Mammary epithelial cell (primary cell): ENCODE measurements at regions of chr1 and their contacts with region 1.

Region 1: DNA sequence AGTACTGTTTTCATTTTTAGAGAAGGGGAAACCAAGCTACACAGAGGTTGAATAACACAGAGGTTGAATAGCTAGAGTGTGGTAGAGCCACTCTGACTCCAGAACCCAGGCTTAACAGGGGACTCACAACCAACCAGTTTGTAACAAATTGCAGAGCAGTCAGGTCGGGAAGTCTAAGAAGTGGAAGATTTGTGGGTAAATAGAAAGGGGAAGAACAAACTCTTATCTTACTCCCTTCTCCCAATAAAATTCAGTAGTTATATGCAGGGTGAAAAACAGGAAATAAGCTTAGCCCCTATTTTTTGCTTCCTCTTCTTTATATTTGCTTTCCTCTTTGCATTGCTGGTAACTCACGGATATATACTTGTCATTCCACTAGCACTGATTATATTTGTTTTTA is 23.2 kb downstream of the CDC42 start:
- DNase-seq: no peak
- H3K4me3 ChIP-seq: no peak overlapping the region
- H3K27ac ChIP-seq: no peak overlapping the region
- H3K4me1 ChIP-seq: no peaks in the 10 kb centered on the region
- H3K27me3 ChIP-seq: no peaks in the 10 kb centered on the region
- CTCF ChIP-seq: no peak

Region 2: DNA sequence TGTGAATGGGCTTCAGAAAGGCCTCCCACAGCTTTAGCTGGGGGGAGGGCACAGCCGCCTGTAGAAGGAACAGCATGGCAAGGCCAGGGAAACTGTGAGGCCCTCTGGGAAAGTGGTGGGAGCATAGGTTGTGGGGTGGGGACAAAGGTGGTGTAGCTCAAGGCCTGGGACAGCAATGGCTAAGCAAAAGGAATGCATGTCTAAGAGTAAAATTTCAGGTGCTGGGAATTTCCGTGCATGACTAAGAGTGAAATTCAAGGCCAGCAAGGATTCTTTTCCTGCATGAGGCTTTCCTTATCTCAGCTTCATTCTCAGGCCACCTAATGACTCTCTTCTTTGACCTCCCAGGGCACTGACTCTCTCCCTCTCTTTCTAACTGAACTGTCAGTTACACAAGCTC is 153.7 kb after region 1 on chr1:
- CTCF ChIA-PET with region 1: interaction called, 16 read pairs
- dilution Hi-C with region 1: no loop called
- in situ Hi-C with region 1: no loop called
- intact Hi-C with region 1: no loop called
- DNase-seq: peak; percentile 87
- H3K4me3 ChIP-seq: no peak overlapping the region
- H3K27ac ChIP-seq: no peak overlapping the region
- H3K4me1 ChIP-seq: peaks cover 14% of the 10 kb centered on the region
- H3K27me3 ChIP-seq: no peaks in the 10 kb centered on the region
- CTCF ChIP-seq: no peak